ENCODE measurements at regions of chr6 and their contacts with region 1.

Region 1: DNA sequence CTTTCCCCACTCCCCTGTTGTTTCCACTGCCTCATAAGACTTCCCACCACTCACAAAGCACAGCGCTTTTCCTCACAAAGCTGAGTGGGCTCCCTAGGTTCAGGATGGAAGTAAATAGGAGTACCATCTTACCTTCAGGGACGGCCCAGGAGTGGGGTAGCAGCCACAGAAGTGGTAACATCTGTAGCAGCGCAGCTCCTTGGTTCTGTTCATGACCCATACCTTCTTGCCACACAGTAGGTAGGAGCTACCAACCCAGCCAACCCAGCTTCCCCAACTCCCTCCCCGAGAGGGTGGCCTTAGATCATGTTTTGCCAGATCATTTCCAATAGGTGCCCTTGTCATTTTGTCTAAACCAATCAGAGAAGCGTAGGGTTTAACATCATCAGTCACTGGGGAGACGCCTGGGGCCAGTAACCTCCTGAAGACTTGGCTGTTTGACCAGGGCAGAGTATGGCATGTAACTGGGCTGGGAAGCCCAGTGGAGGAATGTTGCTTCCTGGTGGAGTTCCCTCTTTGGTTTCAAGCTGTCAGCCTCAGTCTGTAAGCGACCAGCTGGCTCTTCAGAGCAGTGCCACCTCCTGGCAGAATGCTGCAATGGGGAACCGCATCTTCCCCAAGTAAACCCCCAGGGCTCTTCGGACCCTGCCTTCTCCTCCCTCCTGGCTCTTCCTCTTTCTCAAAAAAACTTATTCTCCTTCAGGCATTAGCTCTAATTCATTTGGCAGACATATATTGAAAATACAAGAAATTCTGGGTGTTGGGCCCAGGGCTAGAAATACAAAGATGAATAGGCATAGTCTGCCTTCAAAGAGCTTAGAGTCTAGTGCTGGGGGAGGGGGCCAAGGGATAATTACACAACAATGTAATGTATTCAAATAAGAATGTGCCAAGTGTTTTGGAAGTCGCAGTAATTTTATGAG is at the start of gene HLA-DMA:
- DNase-seq: peak; percentile 80
- H3K4me3 ChIP-seq: peak within 1 kb of the TSS; percentile 29
- H3K27ac ChIP-seq: no peak within 1 kb of the TSS
- H3K27me3 ChIP-seq: no peaks in the 10 kb centered on the region
- CTCF ChIP-seq: peak; percentile 82
- polyA plus RNA-seq, gene HLA-DMA: 7.1 and 8.2 TPM in 2 replicates

Region 2: GRCh38 chr6:32838114-32838958 is 114.7 kb before region 1 on chr6 and contains the start of gene TAP2:
- CTCF ChIA-PET with region 1: interaction called, 14 read pairs
- POLR2A ChIA-PET with region 1: no interaction called
- DNase-seq: peak; percentile 74
- H3K4me3 ChIP-seq: peak within 1 kb of the TSS; percentile 92
- H3K27ac ChIP-seq: peak within 1 kb of the TSS; percentile 92
- H3K27me3 ChIP-seq: no peaks in the 10 kb centered on the region
- CTCF ChIP-seq: peak; percentile 96
- polyA plus RNA-seq, gene TAP2: 15.3 and 15.4 TPM in 2 replicates

Region 3: GRCh38 chr6:32885698-32886286 is 67.3 kb before region 1 on chr6:
- CTCF ChIA-PET with region 1: interaction called, 72 read pairs
- POLR2A ChIA-PET with region 1: no interaction called
- DNase-seq: no peak
- H3K4me3 ChIP-seq: no peak overlapping the region
- H3K27ac ChIP-seq: no peak overlapping the region
- H3K27me3 ChIP-seq: peaks cover 2% of the 10 kb centered on the region
- CTCF ChIP-seq: peak; percentile 63

Region 4: GRCh38 chr6:32894080-32895005 is 58.7 kb before region 1 on chr6:
- CTCF ChIA-PET with region 1: interaction called, 13 read pairs
- POLR2A ChIA-PET with region 1: no interaction called
- DNase-seq: peak; percentile 77
- H3K4me3 ChIP-seq: peak overlapping the region; percentile 77
- H3K27ac ChIP-seq: peak overlapping the region; percentile 66
- H3K27me3 ChIP-seq: no peaks in the 10 kb centered on the region
- CTCF ChIP-seq: no peak

Region 5: DNA sequence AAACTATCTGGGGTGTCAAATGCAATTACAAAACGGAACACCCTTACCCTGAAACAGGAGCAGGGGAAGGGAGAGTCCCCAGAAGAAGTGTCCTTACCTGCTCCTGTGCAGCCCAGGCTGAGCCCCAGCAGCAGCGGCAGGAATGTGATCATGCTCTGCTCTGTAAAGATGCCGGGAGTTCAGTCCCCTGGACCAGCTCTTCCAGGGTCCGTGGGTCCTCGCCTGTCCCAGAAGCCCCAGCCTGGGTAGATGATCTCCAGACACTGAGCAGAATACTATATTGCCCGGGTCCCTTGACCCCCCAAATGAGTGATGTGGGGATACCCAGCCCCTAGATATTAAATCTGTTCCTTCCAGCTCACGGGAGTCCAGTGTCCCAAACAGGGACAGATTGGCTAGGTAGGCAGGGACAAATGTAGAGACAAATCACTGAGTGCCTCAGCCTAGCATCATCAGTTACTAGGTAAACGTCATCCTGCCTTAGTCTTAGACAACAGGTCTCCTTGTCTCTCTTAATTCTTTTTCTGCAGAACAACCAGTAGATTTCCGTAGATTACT is 12.3 kb before region 1 on chr6 and contains the start of gene HLA-DMB:
- CTCF ChIA-PET with region 1: interaction called, 144 read pairs
- POLR2A ChIA-PET with region 1: interaction called, 3 read pairs
- DNase-seq: peak; percentile 29
- H3K4me3 ChIP-seq: no peak within 1 kb of the TSS
- H3K27ac ChIP-seq: no peak within 1 kb of the TSS
- H3K27me3 ChIP-seq: peaks cover 20% of the 10 kb centered on the region
- CTCF ChIP-seq: no peak
- polyA plus RNA-seq, gene HLA-DMB: 0.07 and 0.12 TPM in 2 replicates

Region 6: DNA sequence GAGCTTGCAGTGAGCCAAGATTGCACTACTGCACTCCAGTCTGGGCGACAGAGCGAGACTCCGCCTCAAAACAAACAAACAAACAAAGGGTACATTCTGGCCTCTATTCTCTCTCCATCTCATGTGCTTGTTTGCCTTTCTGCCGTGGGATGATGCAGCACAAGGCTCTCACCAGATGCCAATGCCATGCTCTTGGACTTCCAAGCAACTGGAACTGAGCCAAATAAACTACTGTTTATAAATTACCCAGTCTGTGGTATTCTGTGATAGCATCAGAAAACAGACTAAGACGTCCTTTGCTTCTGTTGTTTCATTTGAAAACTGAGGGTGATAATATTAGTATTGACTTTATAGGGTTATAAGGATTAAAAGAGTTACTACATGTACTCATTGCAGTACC is 11.7 kb after region 1 on chr6:
- CTCF ChIA-PET with region 1: interaction called, 72 read pairs
- POLR2A ChIA-PET with region 1: interaction called, 85 read pairs
- DNase-seq: no peak
- H3K4me3 ChIP-seq: no peak overlapping the region
- H3K27ac ChIP-seq: no peak overlapping the region
- H3K27me3 ChIP-seq: no peaks in the 10 kb centered on the region
- CTCF ChIP-seq: no peak

Region 7: DNA sequence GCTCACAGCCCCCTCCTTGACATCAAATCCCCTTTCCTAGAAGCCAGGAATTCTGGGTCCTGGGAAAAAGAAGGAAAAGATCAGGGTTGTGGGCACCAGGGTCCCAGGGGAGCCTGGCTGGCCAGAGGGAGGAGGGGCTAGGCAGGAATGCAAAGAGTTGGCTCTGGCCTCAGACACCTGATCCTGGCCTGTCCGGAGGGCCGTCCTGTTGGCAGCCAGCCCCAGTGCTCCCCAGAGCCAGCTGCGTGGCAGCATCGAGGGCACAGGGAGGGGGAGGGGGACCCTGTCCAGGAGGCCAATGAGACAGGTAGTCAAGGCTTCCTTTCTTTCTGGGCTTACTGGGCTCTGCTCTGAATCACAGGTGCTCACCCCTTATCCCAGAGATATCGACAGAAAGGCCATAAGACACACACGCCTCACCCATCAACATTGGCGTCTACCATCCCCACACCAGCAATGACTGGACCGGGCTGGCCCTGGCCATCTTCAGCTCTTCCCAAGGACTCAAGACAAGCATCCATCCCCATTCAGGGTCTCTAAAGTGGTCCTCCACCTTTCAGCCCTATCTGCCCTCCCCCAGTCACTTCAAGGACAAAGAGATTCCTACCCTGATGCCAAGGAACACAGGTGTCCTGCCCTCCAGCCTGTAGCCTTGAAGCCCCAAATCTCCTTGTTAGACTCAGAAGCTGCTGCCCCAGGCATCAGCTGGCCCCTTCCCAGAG is 238.5 kb after region 1 on chr6:
- CTCF ChIA-PET with region 1: no interaction called
- POLR2A ChIA-PET with region 1: no interaction called
- DNase-seq: no peak
- H3K4me3 ChIP-seq: no peak overlapping the region
- H3K27ac ChIP-seq: no peak overlapping the region
- H3K27me3 ChIP-seq: peaks cover 42% of the 10 kb centered on the region
- CTCF ChIP-seq: no peak